Activated CD8-positive, alpha-beta T cell treated with anti-CD3 and anti-CD28 coated beads for 36 hours (primary cell): ENCODE measurements at regions of chr1 and their contacts with region 1.

Region 1: DNA sequence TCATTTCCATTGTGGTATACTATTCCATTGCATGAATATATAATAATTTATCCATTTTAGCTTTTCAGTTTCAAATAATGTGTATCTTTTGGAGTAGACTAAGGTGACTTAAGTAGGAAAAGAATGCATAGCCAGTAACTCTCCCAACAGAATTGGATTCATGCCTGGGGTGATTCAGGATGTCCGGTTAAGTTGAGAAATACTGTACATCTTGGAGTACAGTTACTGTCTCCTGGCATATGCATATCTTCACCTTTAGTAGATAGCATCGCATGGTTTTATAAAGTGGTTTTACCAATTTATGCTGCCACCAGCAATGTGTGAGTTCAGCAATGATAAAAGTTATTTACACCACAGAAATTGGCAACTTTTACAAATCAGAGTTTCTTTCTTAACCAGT is 18.6 kb upstream of the SLC6A9 start:
- DNase-seq: no peak
- ATAC-seq: no peak
- H3K4me3 Mint-ChIP-seq: no peak overlapping the region
- H3K27ac Mint-ChIP-seq: no peak overlapping the region
- H3K4me1 Mint-ChIP-seq: peaks cover 18% of the 10 kb centered on the region
- H3K27me3 Mint-ChIP-seq: peaks cover 3% of the 10 kb centered on the region
- CTCF ChIP-seq: no peak

Region 2: GRCh38 chr1:43974443-43975248 is 75.2 kb before region 1 on chr1 and contains the start of gene ATP6V0B:
- CTCF ChIA-PET with region 1: interaction called, 20 read pairs
- POLR2A ChIA-PET with region 1: interaction called, 3 read pairs
- intact Hi-C with region 1: no loop called
- DNase-seq: peak; percentile 98
- ATAC-seq: peak; percentile 72
- H3K4me3 Mint-ChIP-seq: peak within 1 kb of the TSS; percentile 90
- H3K27ac Mint-ChIP-seq: peak within 1 kb of the TSS; percentile 90
- H3K4me1 Mint-ChIP-seq: peaks cover 48% of the 10 kb centered on the region
- H3K27me3 Mint-ChIP-seq: no peaks in the 10 kb centered on the region
- CTCF ChIP-seq: no peak
- total RNA-seq, gene ATP6V0B: 67.6 to 75.5 TPM

Region 3: GRCh38 chr1:44002606-44003157 is 47.2 kb before region 1 on chr1:
- CTCF ChIA-PET with region 1: interaction called, 100 read pairs
- POLR2A ChIA-PET with region 1: no interaction called
- intact Hi-C with region 1: loop called (anchors 5 kb)
- DNase-seq: no peak
- ATAC-seq: no peak
- H3K4me3 Mint-ChIP-seq: no peak overlapping the region
- H3K27ac Mint-ChIP-seq: no peak overlapping the region
- H3K4me1 Mint-ChIP-seq: no peaks in the 10 kb centered on the region
- H3K27me3 Mint-ChIP-seq: no peaks in the 10 kb centered on the region
- CTCF ChIP-seq: peak; percentile 17

Region 4: DNA sequence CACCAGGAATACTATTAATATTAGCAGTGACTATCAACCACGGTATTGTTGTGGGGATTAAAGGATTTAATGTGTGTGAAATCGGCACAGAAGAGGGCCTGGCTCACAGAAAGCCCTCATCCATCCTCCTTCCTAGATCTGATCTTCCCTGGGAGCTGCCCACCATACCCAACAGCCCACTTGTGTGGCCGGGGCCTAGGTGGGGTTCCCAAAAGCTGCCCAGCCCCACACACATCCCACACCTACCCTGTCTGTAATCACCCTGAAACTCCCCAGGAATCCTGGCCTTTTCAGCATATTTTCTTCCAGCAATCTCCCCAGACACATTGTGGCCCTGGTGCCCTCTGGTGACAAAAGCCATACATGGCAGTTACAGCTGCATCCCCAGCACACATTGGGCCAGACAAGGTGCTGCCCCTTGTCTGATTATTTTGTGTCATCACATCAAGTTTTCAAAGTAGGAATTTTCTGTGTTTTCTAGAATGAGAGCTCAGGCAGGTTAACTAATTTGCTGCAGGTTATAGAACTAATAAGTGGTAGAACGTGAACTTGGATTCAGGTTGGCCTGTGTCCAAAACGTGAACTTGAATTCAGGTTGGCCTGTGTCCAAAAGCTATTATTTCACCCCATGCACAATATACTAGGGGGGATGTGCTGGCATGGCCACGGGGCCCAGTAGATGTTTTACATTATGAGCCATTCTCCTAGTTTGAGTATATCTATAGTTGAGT is 13.3 kb before region 1 on chr1:
- CTCF ChIA-PET with region 1: interaction called, 55 read pairs
- POLR2A ChIA-PET with region 1: no interaction called
- intact Hi-C with region 1: no loop called
- DNase-seq: peak; percentile 81
- ATAC-seq: peak; percentile 93
- H3K4me3 Mint-ChIP-seq: no peak overlapping the region
- H3K27ac Mint-ChIP-seq: no peak overlapping the region
- H3K4me1 Mint-ChIP-seq: peaks cover 9% of the 10 kb centered on the region
- H3K27me3 Mint-ChIP-seq: no peaks in the 10 kb centered on the region
- CTCF ChIP-seq: peak; percentile 72